ENCODE measurements at regions of chr21 and their contacts with region 1.

Region 1: DNA sequence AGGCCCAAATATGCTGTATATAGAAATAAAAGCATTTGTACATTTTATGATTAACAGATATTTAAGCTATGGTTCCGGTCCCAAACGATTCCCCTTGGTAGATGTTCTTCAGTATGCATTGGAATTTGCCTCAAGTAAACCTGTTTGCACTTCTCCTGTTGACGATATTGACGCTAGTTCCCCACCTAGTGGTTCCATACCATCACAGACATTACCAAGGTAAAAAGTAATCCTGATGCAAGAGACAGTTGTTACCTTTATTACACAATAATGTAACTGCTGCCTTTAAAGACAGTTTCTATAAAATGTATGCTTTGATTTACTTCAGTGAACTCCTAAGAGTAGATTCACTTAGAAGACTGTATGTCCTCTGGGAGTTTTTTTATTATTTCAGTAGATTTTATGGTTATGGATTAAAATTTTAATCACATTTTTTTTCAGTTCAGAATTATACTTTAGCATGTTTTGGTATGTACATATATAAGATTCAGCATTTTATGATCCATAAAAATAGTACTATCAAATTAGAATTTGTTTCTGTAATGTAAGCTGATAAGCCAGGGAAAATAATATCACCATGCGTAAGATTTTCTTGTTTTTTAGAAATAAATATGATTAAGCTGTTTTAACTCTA is 96.5 kb downstream of the USP25 start:
- DNase-seq: no peak
- H3K4me3 Mint-ChIP-seq: no peak overlapping the region
- H3K27ac Mint-ChIP-seq: no peak overlapping the region
- H3K4me1 Mint-ChIP-seq: peaks cover 22% of the 10 kb centered on the region
- H3K27me3 Mint-ChIP-seq: no peaks in the 10 kb centered on the region

Region 2: GRCh38 chr21:15514073-15514946 is 312.0 kb before region 1 on chr21:
- CTCF ChIA-PET with region 1: no interaction called
- POLR2A ChIA-PET with region 1: no interaction called
- intact Hi-C with region 1: loop called (anchors 1 kb)
- DNase-seq: peak; percentile 67
- H3K4me3 Mint-ChIP-seq: peak overlapping the region; percentile 24
- H3K27ac Mint-ChIP-seq: peak overlapping the region; percentile 26
- H3K4me1 Mint-ChIP-seq: peaks cover 21% of the 10 kb centered on the region
- H3K27me3 Mint-ChIP-seq: no peaks in the 10 kb centered on the region

Region 3: GRCh38 chr21:15592271-15592860 is 233.9 kb before region 1 on chr21:
- CTCF ChIA-PET with region 1: no interaction called
- POLR2A ChIA-PET with region 1: no interaction called
- intact Hi-C with region 1: loop called (anchors 10 kb)
- DNase-seq: no peak
- H3K4me3 Mint-ChIP-seq: no peak overlapping the region
- H3K27ac Mint-ChIP-seq: no peak overlapping the region
- H3K4me1 Mint-ChIP-seq: no peaks in the 10 kb centered on the region
- H3K27me3 Mint-ChIP-seq: peaks cover 3% of the 10 kb centered on the region

Region 4: DNA sequence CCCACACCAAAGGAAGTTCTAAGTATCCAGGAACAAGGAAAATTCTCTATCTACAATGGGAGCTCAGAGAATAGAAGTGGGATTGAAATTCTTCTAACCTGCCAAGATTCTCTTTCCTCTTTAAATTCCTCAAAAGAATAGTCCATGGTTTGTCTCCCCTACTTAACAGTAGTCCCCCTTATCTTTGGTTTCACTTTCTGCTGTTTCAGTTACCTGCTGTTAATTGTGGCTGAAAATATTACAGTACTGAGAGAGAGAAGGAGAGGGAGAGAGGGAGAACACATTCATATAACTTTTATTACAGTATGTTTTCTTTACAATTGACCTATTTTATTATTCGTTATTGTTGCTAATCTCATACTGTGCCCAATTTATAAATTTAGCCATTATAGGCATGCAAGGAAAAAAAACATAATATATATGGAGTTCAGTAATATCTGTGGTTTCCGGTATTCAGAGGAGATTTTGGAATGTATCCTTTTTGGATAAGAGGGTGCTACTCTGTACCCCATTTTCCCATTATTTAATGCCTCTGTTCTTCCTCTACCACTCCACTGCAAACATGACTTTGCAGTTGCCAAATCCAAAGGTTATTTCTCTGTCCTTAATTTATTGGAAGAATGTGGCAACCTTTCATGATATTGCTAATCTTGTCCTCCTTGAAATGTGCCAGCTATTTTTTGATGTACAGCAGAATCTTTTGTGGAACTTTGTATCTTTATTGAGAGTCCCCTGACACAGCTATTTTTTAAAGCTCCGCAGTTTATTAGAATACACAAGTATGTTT is 28.5 kb before region 1 on chr21:
- CTCF ChIA-PET with region 1: interaction called, 3 read pairs
- POLR2A ChIA-PET with region 1: no interaction called
- intact Hi-C with region 1: loop called (anchors 2 kb)
- DNase-seq: no peak
- H3K4me3 Mint-ChIP-seq: no peak overlapping the region
- H3K27ac Mint-ChIP-seq: no peak overlapping the region
- H3K4me1 Mint-ChIP-seq: peaks cover 63% of the 10 kb centered on the region
- H3K27me3 Mint-ChIP-seq: no peaks in the 10 kb centered on the region